Activated T-helper 1 cell treated with anti-CD3 and anti-CD28 coated beads, Interleukin-12 subunit alpha, Interleukin-12 subunit beta, Interleukin-2, Interleukin-4 antibody, amounts not matched to agents 30 ng/mL and 10 ng/mL and 1 ng/mL, durations not matched to agents 14 hours and 24 hours and 36 hours (primary cell): ENCODE measurements at regions of chrX and their contacts with region 1.

Region 1: GRCh38 chrX:45806410-45807121 is 605.9 kb upstream of the DIPK2B start:
- DNase-seq: peak; percentile 41
- H3K4me3 Mint-ChIP-seq: peak overlapping the region; percentile 66
- H3K27ac Mint-ChIP-seq: peak overlapping the region; percentile 96
- H3K4me1 Mint-ChIP-seq: peaks cover 93% of the 10 kb centered on the region
- H3K27me3 Mint-ChIP-seq: peaks cover 3% of the 10 kb centered on the region

Region 2: GRCh38 chrX:45818913-45819312 is 12.3 kb after region 1 on chrX:
- intact Hi-C with region 1: loop called (anchors 1 kb)
- DNase-seq: no peak
- H3K4me3 Mint-ChIP-seq: peak overlapping the region; percentile 40
- H3K27ac Mint-ChIP-seq: peak overlapping the region; percentile 77
- H3K4me1 Mint-ChIP-seq: peaks cover 32% of the 10 kb centered on the region
- H3K27me3 Mint-ChIP-seq: no peaks in the 10 kb centered on the region

Region 3: DNA sequence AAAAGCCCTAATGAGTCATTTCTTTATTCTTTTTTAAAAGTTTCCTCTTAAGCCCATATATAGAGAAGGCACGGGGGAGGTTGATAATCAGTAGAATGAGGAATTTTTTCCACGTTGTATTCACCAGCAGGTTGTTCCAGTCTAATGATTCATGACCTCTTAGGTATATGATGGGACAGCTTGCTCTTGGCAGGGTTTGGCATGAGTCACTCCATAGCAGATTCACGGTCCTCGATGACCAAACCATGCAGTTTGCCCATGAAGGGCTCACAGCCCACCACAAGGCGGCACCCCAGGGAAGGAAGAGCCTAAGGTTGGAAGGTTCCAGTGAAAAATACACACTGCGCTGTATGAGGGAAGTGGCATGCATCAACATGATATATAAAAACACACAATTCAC is 17.9 kb after region 1 on chrX:
- intact Hi-C with region 1: loop called (anchors 1 kb)
- DNase-seq: no peak
- H3K4me3 Mint-ChIP-seq: peak overlapping the region; percentile 9
- H3K27ac Mint-ChIP-seq: peak overlapping the region; percentile 80
- H3K4me1 Mint-ChIP-seq: peaks cover 25% of the 10 kb centered on the region
- H3K27me3 Mint-ChIP-seq: no peaks in the 10 kb centered on the region